Cardiac septum (tissue), 1 donor: ENCODE measurements at regions of chr16 and their contacts with region 1.

Region 1: DNA sequence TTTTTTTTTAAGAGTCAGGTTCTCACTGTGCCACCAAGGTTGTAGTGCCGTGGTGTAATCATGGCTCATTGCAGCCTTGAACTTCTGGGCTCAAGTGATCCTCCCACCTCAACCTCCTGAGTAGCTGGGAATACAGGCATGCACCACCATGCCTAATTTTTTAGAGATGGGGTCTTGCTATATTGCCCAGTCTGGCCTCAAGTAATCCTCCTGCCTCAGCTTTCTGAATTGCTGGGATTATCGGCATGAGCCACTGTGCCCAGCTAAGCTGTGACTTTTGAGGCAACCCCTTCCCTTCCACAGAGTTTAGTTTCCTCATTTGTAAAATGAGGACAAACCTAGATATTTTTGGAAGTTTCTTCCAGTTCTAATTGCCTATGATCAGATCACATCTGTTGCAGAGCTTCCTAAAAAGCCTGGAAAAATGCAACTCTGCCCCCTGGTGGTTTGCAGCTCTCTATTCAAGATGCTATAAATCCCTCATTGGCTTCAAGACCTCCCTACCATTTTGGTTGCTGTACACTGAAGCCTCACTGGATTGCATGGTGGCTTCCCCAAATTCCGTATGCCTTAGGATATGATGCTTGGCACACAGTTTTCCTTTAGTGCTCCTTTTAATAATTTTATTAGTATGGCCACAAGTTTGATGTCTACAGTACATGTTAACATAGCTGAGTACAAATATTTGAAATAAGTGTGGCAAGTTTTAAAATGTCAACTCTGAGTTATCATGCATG is 19.3 kb downstream of the GDE1 start:
- DNase-seq: no peak

Region 2: DNA sequence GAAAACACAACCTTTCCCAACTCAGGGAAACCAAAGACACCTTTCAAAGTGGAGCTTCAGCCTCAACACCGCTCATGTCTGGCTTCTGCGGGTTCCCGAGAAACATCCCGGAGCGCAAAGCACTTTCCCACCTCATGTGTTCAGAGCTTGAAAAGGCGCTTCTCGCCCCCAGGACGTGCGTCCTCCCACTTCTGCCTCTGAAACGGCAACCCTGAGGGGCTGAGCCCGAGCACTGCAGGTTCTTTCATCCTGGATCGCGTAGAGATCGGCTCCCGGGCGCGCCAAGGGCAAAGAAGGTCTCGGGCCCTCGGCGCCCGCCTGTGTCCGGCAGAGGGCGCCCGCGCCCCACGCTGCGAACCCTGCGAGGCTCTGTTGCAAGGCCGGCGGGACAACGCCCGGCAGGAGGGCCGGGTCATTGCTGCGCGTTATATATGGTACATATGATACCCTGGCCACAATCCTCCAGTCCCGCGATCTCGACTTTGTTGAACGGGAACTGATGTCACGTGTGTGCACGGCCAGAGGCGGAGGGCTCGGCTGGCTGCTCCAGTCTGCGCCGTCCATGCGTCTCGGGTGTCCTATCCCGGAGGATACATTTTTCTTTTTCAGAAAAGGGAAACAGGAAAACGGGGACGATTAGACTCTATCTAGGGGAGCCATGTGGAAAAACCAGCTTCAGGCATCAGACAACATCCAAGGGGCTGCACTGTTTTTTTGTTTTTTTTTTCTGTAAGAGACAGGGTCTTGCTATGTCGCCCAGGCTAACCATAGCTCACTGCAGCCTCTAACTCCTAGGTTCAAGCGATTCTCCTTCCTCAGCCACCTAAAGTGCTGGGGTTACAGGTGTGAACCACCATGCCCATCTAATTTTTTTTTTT is 416.0 kb before region 1 on chr16:
- intact Hi-C with region 1: loop called (anchors 1 kb)
- DNase-seq: peak; percentile 95